ENCODE measurements at regions of chr17 and their contacts with region 1.

Region 1: DNA sequence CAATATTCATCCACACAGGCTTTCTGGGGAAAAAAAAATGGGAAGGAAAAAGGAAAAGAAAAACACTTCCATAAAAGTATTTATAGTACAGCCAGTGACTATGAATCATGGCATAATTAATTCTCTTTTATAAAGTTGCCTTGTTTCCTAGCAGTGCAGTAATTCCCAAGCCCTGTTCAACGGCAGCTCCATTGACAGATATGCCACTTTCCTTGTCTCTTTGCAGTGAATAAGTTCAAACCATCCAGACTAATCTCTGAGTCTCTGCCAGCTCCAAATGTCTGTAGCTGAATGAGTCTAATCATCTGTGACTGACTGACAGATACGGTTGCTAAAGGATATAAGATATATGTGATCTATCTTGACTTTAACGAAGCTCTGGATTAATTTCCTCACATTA is 52.9 kb upstream of the KCNJ16 start:
- DNase-seq: no peak
- ATAC-seq: no peak
- H3K4me3 ChIP-seq: no peak overlapping the region
- H3K27ac ChIP-seq: no peak overlapping the region
- H3K4me1 ChIP-seq: no peaks in the 10 kb centered on the region
- H3K27me3 ChIP-seq: no peaks in the 10 kb centered on the region
- CTCF ChIP-seq: no peak
- POLR2A ChIP-seq: no peak
- RAD21 ChIP-seq: no peak

Region 2: DNA sequence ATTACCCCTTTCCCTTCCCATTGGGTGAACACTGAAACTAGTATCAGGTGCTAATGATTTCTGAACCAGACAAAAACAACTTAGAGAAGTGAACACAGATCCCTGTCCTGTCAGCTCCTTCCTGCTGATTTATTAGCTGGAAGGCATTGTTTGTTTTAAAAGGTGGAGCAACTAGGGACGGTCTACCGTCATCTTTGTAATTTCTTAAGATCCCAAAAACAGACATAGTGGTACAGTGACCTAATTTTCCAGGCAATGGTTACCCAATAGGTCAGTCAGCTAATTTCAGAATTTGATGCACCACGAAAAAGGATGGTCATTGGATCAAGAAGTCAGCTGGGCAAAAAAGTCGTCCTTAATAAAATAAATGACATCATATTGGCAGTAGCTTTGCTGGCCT is 25.4 kb after region 1 on chr17:
- CTCF ChIA-PET with region 1: no interaction called
- POLR2A ChIA-PET with region 1: no interaction called
- RAD21 ChIA-PET with region 1: no interaction called
- intact Hi-C with region 1: loop called (anchors 1 kb)
- DNase-seq: no peak
- ATAC-seq: no peak
- H3K4me3 ChIP-seq: no peak overlapping the region
- H3K27ac ChIP-seq: no peak overlapping the region
- H3K4me1 ChIP-seq: no peaks in the 10 kb centered on the region
- H3K27me3 ChIP-seq: no peaks in the 10 kb centered on the region
- CTCF ChIP-seq: no peak
- POLR2A ChIP-seq: no peak
- RAD21 ChIP-seq: no peak

Region 3: DNA sequence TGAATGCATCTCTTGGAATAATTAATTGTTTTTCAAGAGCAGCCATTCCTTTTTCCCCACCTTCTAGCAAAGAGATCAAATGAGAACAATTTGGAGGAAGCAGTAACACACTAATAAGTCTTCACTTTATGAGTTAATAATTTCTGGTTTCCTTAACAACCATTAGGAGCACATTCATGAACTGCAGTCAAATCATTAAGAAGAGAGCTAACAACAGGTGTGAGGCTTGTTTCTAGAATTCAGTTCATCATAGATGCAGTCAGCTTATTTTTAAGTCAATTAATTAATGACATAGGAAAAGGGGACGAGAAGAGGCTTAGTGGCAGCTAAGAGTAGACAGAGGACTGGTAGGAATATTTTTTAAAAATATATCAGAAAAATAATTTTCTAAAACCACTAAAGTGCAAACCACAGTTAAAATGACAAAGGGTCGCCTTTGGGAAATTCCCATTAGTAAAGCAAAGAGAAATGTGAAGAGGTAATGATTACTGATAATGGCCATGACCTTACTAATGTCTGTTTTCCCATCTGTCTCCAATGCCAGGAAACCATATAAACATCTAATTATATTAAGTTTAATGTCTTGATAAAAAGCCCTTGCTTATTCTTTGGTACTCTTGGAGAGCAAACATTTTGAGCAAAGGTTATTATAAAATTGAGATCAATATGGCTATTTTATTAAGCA is 331.4 kb after region 1 on chr17:
- CTCF ChIA-PET with region 1: no interaction called
- POLR2A ChIA-PET with region 1: no interaction called
- RAD21 ChIA-PET with region 1: no interaction called
- intact Hi-C with region 1: no loop called
- DNase-seq: no peak
- ATAC-seq: no peak
- H3K4me3 ChIP-seq: no peak overlapping the region
- H3K27ac ChIP-seq: no peak overlapping the region
- H3K4me1 ChIP-seq: no peaks in the 10 kb centered on the region
- H3K27me3 ChIP-seq: no peaks in the 10 kb centered on the region
- CTCF ChIP-seq: no peak
- POLR2A ChIP-seq: no peak
- RAD21 ChIP-seq: no peak

Measured in HCT116 (cell line).